ENCODE measurements at regions of chr21 and their contacts with region 1.

Region 1: GRCh38 chr21:27476696-27477095 is 509.8 kb upstream of the ADAMTS5 start:
- DNase-seq: no peak
- ATAC-seq: no peak
- H3K4me3 ChIP-seq: no peak overlapping the region
- H3K27ac ChIP-seq: no peak overlapping the region
- H3K4me1 ChIP-seq: no peaks in the 10 kb centered on the region
- H3K27me3 ChIP-seq: no peaks in the 10 kb centered on the region

Region 2: DNA sequence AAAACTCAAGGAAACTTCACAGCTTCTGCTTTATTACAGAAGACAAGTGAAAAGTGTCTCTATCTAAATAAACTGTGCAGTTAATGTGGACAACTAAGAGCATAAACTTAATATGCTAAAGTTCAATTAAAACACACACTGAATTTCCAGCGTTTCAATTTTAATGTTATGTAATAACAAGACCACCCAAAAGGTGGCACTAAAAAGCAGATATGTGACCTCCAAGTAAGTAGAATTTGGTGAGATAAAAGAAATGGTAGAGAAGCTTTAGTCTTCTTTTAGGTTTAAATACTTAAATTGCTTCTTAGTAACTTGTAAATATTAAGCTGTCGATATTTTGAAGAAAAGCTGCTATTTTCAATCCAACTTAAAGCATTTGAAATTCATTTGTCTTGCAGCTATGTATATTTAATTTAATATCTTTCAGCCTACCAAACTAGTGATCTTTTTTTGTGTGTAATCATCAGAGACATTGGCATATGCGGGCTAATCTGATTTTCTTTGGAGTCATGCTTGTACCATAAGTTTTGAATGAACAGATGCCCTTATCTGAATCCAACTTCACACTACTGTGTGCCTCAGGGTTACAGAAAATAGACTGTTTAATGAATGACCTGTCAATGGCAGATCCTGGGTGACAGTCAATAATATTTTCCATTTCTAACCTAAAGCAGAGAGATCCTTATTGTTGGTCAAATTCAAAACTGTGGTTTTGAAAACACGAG is 595.0 kb before region 1 on chr21:
- intact Hi-C with region 1: loop called in 1 of 2 experiments (anchors 10 kb)
- DNase-seq: no peak
- ATAC-seq: no peak
- H3K4me3 ChIP-seq: no peak overlapping the region
- H3K27ac ChIP-seq: no peak overlapping the region
- H3K4me1 ChIP-seq: no peaks in the 10 kb centered on the region
- H3K27me3 ChIP-seq: no peaks in the 10 kb centered on the region

Region 3: DNA sequence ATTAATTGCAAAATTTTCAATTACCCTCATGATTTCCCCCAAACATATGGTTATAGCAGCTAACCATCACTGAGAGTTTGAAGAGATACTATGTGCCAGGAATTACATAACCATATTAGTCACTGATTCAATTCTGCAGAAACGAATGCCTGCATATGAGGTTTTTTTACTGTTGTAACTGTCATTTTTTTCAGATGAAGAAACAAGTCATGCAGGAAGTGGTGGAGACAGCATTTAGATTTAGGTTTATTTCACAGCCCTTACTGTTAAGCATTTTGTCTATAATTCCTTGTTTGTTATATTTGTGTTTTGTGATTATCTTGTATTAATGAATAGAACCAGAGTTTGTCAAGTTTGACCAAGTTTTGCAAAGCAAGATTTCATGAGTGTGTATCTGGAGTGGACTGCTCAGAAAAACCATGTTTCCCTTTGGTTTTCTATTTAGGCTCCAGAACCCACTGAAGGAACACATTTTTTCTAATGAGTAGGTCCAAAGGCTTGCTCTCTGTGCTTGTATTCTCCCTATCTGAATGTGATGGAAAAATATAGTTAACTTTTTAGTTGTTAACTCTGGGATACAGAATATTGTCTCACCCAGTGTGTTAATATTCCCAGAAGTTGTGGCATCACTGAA is 201.3 kb before region 1 on chr21:
- intact Hi-C with region 1: no loop called
- DNase-seq: no peak
- ATAC-seq: no peak
- H3K4me3 ChIP-seq: no peak overlapping the region
- H3K27ac ChIP-seq: no peak overlapping the region
- H3K4me1 ChIP-seq: peaks cover 0 to 3% of the 10 kb centered on the region in 2 donors
- H3K27me3 ChIP-seq: no peaks in the 10 kb centered on the region